WTC11 (cell line): ENCODE measurements at regions of chr3 and their contacts with region 1.

Region 1: GRCh38 chr3:73508330-73508954 is 116.3 kb downstream of the PDZRN3 start:
- DNase-seq: peak; percentile 54
- ATAC-seq: peak; percentile 70
- H3K4me3 Mint-ChIP-seq: no peak overlapping the region
- H3K27ac Mint-ChIP-seq: no peak overlapping the region
- H3K4me1 Mint-ChIP-seq: peaks cover 47% of the 10 kb centered on the region
- H3K27me3 Mint-ChIP-seq: peaks cover 28% of the 10 kb centered on the region
- CTCF ChIP-seq: peak; percentile 77

Region 2: GRCh38 chr3:73493543-73494308 is 14.7 kb before region 1 on chr3:
- CTCF ChIA-PET with region 1: interaction called, 24 read pairs
- POLR2A ChIA-PET with region 1: no interaction called
- DNase-seq: no peak
- ATAC-seq: no peak
- H3K4me3 Mint-ChIP-seq: no peak overlapping the region
- H3K27ac Mint-ChIP-seq: no peak overlapping the region
- H3K4me1 Mint-ChIP-seq: peaks cover 72% of the 10 kb centered on the region
- H3K27me3 Mint-ChIP-seq: no peaks in the 10 kb centered on the region
- CTCF ChIP-seq: no peak

Region 3: DNA sequence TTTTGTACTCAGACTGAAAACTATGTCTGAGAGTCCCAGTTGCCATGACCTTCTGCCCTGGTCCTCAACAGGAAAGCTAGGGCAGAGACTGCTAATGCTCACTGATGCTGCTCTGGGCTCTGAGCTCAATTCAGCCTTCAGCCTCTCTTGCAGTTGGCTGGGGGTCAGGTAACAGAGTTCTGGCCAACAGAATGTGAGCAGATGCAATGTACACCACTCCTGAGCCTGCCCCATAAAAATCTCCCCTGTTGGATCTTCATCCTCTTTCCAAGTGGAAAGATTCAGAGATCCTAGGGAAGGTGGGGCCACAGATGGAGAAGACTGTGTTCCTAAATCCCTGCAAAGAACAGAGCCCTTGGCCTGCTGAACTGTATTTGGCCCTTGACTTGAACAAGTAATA is 28.5 kb after region 1 on chr3:
- CTCF ChIA-PET with region 1: no interaction called
- POLR2A ChIA-PET with region 1: no interaction called
- DNase-seq: no peak
- ATAC-seq: no peak
- H3K4me3 Mint-ChIP-seq: no peak overlapping the region
- H3K27ac Mint-ChIP-seq: no peak overlapping the region
- H3K4me1 Mint-ChIP-seq: peaks cover 37% of the 10 kb centered on the region
- H3K27me3 Mint-ChIP-seq: no peaks in the 10 kb centered on the region
- CTCF ChIP-seq: no peak

Region 4: DNA sequence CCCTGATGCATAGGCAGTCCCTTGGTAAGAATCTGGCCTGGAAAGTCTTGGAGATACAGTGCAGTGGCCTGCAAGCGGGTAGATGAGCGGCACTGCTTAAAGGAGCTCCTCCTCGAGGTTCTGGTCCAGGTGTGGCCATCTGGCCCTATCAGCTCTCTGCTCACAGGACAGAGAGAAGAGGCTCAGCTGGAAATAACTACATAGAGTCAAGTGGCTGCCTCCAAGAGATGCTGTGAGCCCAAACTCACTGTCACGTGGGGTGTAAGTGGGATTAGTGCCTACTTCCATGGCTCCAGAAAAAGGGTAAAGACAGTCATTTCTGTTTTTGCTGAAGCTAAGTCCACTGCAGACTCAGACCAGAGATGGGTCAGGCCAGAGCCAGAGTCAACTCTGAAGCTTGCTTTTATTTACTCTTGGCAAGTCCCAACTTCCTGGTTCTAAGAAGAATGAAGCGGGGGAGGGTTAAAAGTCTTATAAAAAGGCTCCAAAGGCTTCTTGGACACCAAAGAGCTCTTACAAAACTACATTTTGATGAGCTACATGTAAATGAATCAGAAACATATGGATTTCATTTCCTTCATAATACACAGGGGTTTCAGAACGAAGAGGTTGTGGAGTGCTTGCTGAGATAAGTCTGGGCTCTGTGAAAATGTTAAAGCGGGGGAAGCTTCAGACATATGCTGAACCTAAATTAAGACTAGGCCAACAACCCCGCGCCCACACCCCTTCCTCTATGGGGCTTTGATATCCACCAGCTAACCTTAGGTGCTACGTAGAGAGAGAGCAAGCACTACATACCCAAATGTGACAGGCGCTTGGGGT is 39.2 kb after region 1 on chr3:
- CTCF ChIA-PET with region 1: interaction called, 14 read pairs
- POLR2A ChIA-PET with region 1: no interaction called
- DNase-seq: no peak
- ATAC-seq: peak; percentile 48; the same call in 1 of the 2 replicates
- H3K4me3 Mint-ChIP-seq: no peak overlapping the region
- H3K27ac Mint-ChIP-seq: no peak overlapping the region
- H3K4me1 Mint-ChIP-seq: peaks cover 20% of the 10 kb centered on the region
- H3K27me3 Mint-ChIP-seq: no peaks in the 10 kb centered on the region
- CTCF ChIP-seq: no peak

Region 5: DNA sequence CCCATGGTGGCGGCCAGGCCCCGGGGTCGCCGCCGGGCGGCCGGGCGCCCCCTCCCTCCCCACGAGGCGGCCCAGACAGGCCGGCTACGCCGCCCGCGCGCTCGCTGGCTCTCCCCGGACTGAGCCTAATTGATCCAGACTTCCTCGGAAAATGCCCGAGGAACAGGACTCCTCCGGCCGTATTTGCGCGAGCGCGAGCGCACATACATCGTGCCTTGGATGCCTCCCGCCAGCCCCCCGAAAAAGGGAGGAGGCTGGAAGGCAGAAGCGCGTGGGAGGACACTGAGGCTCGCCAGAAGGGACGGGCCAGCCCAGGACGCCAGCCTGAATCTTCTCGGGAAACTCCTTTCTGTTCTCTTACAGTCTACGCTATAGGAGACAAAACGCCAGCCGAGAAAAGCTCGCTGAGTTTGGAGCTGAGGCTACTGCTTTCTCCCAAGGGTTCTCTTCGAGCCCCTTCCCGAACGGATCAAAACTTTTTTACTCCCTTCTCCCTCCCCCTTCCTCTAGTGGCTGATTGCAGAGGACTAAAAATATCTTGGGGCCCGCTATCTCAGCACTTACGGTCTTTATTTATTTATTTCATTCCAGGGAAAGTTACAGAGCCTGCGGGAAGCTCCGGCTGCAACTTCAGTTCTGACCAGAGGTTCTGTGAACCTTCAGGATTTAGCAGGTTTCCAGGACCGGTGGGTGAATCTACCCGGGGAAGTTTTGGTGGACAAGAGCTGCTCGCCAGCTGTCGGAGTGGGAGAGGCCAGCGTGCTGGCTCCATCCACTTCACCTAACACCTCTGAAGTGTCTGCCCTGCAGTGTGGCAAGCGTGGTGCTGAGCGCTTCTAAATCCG is 116.6 kb after region 1 on chr3 and contains the start of gene PDZRN3:
- CTCF ChIA-PET with region 1: interaction called, 12 read pairs
- POLR2A ChIA-PET with region 1: no interaction called
- DNase-seq: peak; percentile 69
- ATAC-seq: peak; percentile 71
- H3K4me3 Mint-ChIP-seq: peak within 1 kb of the TSS; percentile 75
- H3K27ac Mint-ChIP-seq: no peak within 1 kb of the TSS
- H3K4me1 Mint-ChIP-seq: peaks cover 35% of the 10 kb centered on the region
- H3K27me3 Mint-ChIP-seq: peaks cover 42% of the 10 kb centered on the region
- CTCF ChIP-seq: no peak
- total RNA-seq, gene PDZRN3: 7.1 to 9.5 TPM (median 8.8 TPM) in 3 replicates

Region 6: DNA sequence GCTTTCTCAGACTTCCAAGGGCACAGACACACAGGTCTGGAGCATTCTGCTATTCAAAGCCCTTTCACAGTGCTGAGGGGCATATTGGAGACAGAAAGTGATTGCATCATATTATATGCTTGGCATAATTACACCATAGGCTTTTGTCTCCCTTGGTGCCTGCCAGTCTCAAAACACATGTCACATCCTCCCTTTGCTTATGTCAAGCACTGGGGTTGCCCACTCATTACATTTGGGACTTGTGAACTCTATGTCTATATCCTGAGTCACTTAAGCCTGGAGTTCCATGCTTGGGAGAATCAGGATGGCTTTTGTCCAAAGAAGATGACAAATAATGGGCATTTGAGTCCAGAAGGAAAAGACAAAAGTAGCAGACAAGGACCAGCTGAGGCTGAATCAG is 128.6 kb after region 1 on chr3:
- CTCF ChIA-PET with region 1: no interaction called
- POLR2A ChIA-PET with region 1: no interaction called
- DNase-seq: no peak
- ATAC-seq: no peak
- H3K4me3 Mint-ChIP-seq: no peak overlapping the region
- H3K27ac Mint-ChIP-seq: no peak overlapping the region
- H3K4me1 Mint-ChIP-seq: peaks cover 22% of the 10 kb centered on the region
- H3K27me3 Mint-ChIP-seq: no peaks in the 10 kb centered on the region
- CTCF ChIP-seq: no peak

Region 7: DNA sequence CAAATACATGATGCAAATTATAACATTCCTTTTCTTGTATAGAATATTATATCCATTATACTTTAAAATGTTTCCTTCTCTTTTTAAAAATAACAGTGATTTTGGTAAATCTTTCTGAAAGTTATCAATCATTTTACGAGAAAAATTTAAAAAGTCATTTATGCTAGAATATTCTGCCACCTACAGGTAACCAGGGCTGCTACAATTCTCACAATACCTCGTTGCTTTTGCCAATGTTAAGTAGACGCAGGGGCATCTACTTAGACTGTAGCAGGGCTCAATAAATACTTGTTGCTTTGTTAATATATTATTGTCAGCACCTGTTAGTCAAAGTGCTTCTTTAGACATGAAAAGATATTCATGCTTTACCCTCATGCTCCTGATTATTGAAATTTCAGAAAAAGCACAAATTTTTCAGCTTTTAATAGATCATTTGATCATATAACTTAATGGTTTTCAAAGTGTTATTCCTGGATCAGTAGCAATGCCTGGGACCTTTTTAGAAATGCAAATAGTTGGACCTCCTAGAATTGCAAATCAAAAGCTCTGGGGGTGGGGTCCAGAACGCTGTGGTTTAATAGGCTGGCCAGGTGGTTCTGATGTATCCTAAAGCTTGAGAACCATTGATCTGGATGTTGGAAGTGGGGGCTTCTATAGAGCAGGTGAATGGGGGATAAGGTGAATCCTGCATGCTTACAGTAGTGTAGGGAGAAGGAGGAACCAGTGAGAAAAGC is 339.9 kb after region 1 on chr3:
- CTCF ChIA-PET with region 1: interaction called, 29 read pairs
- POLR2A ChIA-PET with region 1: no interaction called
- DNase-seq: no peak
- ATAC-seq: peak; percentile 74
- H3K4me3 Mint-ChIP-seq: no peak overlapping the region
- H3K27ac Mint-ChIP-seq: no peak overlapping the region
- H3K4me1 Mint-ChIP-seq: peaks cover 13% of the 10 kb centered on the region
- H3K27me3 Mint-ChIP-seq: no peaks in the 10 kb centered on the region
- CTCF ChIP-seq: peak; percentile 45; the same call in 1 of the 2 replicates